H1 (cell line): ENCODE measurements at regions of chr3 and their contacts with region 1.

Region 1: GRCh38 chr3:46214751-46215352 is 6.7 kb upstream of the CCR1 start:
- DNase-seq: peak in 1 of 2 experiments; percentile 58
- H3K4me3 ChIP-seq: no peak overlapping the region
- H3K27ac ChIP-seq: no peak overlapping the region
- H3K4me1 ChIP-seq: 0 out of 7 replicates have a peak, but pooled peaks cover 0 to 4% (median 0%) of the 10 kb centered on the region in 4 experiments
- H3K27me3 ChIP-seq: no peaks in the 10 kb centered on the region
- CTCF ChIP-seq: peak; percentile 49 to 74 (median 61)
- EP300 ChIP-seq: no peak
- POLR2A ChIP-seq: no peak
- RAD21 ChIP-seq: peak; percentile 75 to 78

Region 2: DNA sequence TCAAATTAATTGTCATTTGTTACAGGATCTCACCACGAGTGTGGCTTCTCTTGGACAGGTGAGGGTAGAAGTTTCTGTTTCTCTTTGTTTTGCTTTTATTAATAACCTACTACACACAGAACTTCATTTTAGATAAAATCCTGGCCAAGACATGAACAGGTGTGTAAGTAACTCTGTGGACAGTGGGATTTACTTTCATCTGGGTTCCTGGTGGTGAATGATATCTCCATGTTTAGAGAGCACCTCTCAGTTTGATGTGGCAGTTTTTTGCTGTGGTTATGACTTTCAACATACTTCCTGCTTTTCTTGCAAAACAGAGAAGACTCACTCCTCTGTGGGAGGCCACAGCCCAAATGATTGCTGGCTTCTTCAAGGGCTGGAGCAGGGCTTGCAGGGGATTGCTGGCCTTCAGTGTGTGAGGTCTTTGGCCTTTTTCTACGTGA is 116.5 kb before region 1 on chr3:
- CTCF ChIA-PET with region 1: no interaction called
- POLR2A ChIA-PET with region 1: no interaction called
- DNase-seq: no peak
- H3K4me3 ChIP-seq: no peak overlapping the region
- H3K27ac ChIP-seq: no peak overlapping the region
- H3K4me1 ChIP-seq: no peaks in the 10 kb centered on the region
- H3K27me3 ChIP-seq: no peaks in the 10 kb centered on the region
- CTCF ChIP-seq: no peak
- EP300 ChIP-seq: no peak
- POLR2A ChIP-seq: no peak
- RAD21 ChIP-seq: no peak

Region 3: DNA sequence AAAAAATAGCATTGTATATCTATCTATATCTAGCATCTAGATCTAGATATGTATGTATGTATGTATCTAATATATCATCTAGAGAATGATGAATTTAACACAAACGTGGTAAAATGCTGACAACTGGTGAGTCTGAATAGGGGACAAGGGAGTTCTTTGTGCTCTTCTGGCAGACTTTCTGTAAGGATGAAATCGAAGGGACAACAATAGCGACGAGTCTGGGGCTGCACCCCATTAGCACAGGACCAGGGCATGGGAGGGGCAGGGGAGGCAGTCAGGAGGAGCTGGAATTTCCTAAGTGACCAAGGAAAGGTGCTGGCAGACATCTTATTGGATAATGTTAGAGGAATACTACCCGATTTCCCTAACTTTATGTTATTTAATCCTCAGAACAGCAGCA is 14.6 kb before region 1 on chr3:
- CTCF ChIA-PET with region 1: interaction called, 11 read pairs
- POLR2A ChIA-PET with region 1: no interaction called
- DNase-seq: no peak
- H3K4me3 ChIP-seq: no peak overlapping the region
- H3K27ac ChIP-seq: no peak overlapping the region
- H3K4me1 ChIP-seq: no peaks in the 10 kb centered on the region
- H3K27me3 ChIP-seq: no peaks in the 10 kb centered on the region
- CTCF ChIP-seq: no peak
- EP300 ChIP-seq: no peak
- POLR2A ChIP-seq: no peak
- RAD21 ChIP-seq: no peak

Region 4: GRCh38 chr3:46233194-46233593 is 18.3 kb after region 1 on chr3:
- CTCF ChIA-PET with region 1: interaction called, 11 read pairs
- POLR2A ChIA-PET with region 1: no interaction called
- DNase-seq: no peak
- H3K4me3 ChIP-seq: no peak overlapping the region
- H3K27ac ChIP-seq: no peak overlapping the region
- H3K4me1 ChIP-seq: no peaks in the 10 kb centered on the region
- H3K27me3 ChIP-seq: no peaks in the 10 kb centered on the region
- CTCF ChIP-seq: no peak
- EP300 ChIP-seq: no peak
- POLR2A ChIP-seq: no peak
- RAD21 ChIP-seq: no peak

Region 5: DNA sequence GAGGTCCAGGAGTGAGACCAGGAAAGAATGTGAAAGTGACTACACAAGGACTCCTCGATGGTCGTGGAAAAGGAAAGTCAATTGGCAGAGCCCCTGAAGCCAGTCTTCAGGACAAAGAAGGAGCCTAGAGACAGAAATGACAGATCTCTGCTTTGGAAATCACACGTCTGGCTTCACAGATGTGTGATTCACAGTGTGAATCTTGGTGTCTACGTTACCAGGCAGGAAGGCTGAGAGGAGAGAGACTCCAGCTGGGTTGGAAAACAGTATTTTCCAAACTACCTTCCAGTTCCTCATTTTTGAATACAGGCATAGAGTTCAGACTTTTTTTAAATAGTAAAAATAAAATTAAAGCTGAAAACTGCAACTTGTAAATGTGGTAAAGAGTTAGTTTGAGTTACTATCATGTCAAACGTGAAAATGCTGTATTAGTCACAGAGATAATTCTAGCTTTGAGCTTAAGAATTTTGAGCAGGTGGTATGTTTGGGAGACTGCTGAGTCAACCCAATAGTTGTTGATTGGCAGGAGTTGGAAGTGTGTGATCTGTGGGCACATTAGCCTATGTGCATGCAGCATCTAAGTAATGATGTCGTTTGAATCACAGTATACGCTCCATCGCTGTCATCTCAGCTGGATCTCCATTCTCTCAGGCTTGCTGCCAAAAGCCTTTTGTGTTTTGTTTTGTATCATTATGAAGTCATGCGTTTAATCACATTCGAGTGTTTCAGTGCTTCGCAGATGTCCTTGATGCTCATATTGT is 145.1 kb after region 1 on chr3:
- CTCF ChIA-PET with region 1: interaction called, 164 read pairs
- POLR2A ChIA-PET with region 1: no interaction called
- DNase-seq: no peak
- H3K4me3 ChIP-seq: no peak overlapping the region
- H3K27ac ChIP-seq: no peak overlapping the region
- H3K4me1 ChIP-seq: no peaks in the 10 kb centered on the region
- H3K27me3 ChIP-seq: no peaks in the 10 kb centered on the region
- CTCF ChIP-seq: no peak
- EP300 ChIP-seq: no peak
- POLR2A ChIP-seq: no peak
- RAD21 ChIP-seq: no peak

Region 6: GRCh38 chr3:46368569-46368968 is 153.7 kb after region 1 on chr3:
- CTCF ChIA-PET with region 1: interaction called, 164 read pairs
- POLR2A ChIA-PET with region 1: no interaction called
- DNase-seq: peak; percentile 43 to 60
- H3K4me3 ChIP-seq: no peak overlapping the region
- H3K27ac ChIP-seq: no peak overlapping the region
- H3K4me1 ChIP-seq: no peaks in the 10 kb centered on the region
- H3K27me3 ChIP-seq: peaks cover 0 to 5% (median 0%) of the 10 kb centered on the region in 4 experiments; a peak in 1 of 7 replicates
- CTCF ChIP-seq: peak; percentile 77 to 78 (median 77)
- EP300 ChIP-seq: no peak
- POLR2A ChIP-seq: no peak
- RAD21 ChIP-seq: peak; percentile 89 to 90

Region 7: DNA sequence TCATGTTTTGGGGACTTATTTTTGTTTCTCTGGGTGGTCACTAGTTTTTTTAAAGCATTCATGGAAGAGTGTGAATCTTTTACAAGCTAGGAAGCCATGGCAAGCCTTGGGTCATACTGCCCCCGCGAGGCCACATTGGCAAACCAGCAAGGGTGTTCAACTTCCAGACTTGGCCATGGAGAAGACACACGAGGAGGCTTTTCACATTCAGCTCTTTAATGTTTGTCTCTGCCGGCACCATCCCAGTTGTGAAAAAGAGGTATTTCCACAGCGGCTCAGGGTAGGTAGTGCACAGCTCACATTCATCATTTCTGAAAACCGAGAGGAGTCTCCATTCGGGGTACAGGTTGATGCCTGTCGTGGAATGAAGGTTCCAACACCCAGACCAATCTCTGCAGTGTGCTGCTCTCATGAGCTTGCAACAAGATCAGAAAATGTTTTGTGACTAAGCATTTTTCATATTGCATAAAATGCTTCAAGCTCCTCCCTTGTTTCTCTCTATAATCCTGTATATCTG is 163.6 kb after region 1 on chr3:
- CTCF ChIA-PET with region 1: interaction called, 164 read pairs
- POLR2A ChIA-PET with region 1: no interaction called
- DNase-seq: peak; percentile 38 to 83
- H3K4me3 ChIP-seq: no peak overlapping the region
- H3K27ac ChIP-seq: no peak overlapping the region
- H3K4me1 ChIP-seq: peaks cover 1 to 15% (median 8%) of the 10 kb centered on the region in 4 experiments; a peak in 6 of 7 replicates
- H3K27me3 ChIP-seq: no peaks in the 10 kb centered on the region
- CTCF ChIP-seq: peak; percentile 80 to 85 (median 81)
- EP300 ChIP-seq: no peak
- POLR2A ChIP-seq: no peak
- RAD21 ChIP-seq: peak; percentile 90 to 93